ENCODE measurements at regions of chr10 and their contacts with region 1.

Region 1: GRCh38 chr10:79438021-79438698 is 7.3 kb downstream of the ZCCHC24 start:
- DNase-seq: peak; percentile 64
- ATAC-seq: peak; percentile 2; the same call in 1 of the 2 replicates
- H3K4me3 ChIP-seq: no peak overlapping the region
- H3K27ac ChIP-seq: peak overlapping the region; percentile 82
- H3K4me1 ChIP-seq: peaks cover 81% of the 10 kb centered on the region
- H3K27me3 ChIP-seq: no peaks in the 10 kb centered on the region
- CTCF ChIP-seq: peak; percentile 96

Region 2: GRCh38 chr10:79310911-79311573 is 127.1 kb before region 1 on chr10:
- CTCF ChIA-PET with region 1: no interaction called
- POLR2A ChIA-PET with region 1: no interaction called
- intact Hi-C with region 1: no loop called
- DNase-seq: no peak
- ATAC-seq: no peak
- H3K4me3 ChIP-seq: no peak overlapping the region
- H3K27ac ChIP-seq: no peak overlapping the region
- H3K4me1 ChIP-seq: no peaks in the 10 kb centered on the region
- H3K27me3 ChIP-seq: no peaks in the 10 kb centered on the region
- CTCF ChIP-seq: no peak

Region 3: GRCh38 chr10:79411546-79412495 is 26.3 kb before region 1 on chr10:
- CTCF ChIA-PET with region 1: interaction called, 3 read pairs
- POLR2A ChIA-PET with region 1: interaction called, 4 read pairs
- intact Hi-C with region 1: loop called (anchors 2 kb)
- DNase-seq: no peak
- ATAC-seq: no peak
- H3K4me3 ChIP-seq: no peak overlapping the region
- H3K27ac ChIP-seq: no peak overlapping the region
- H3K4me1 ChIP-seq: peaks cover 21% of the 10 kb centered on the region
- H3K27me3 ChIP-seq: no peaks in the 10 kb centered on the region
- CTCF ChIP-seq: no peak

Region 4: GRCh38 chr10:79422178-79422892 is 15.8 kb before region 1 on chr10:
- CTCF ChIA-PET with region 1: interaction called, 10 read pairs
- POLR2A ChIA-PET with region 1: interaction called, 3 read pairs
- intact Hi-C with region 1: no loop called
- DNase-seq: no peak
- ATAC-seq: peak; percentile 6; the same call in 1 of the 2 replicates
- H3K4me3 ChIP-seq: no peak overlapping the region
- H3K27ac ChIP-seq: no peak overlapping the region
- H3K4me1 ChIP-seq: no peaks in the 10 kb centered on the region
- H3K27me3 ChIP-seq: no peaks in the 10 kb centered on the region
- CTCF ChIP-seq: no peak

Region 5: GRCh38 chr10:80372675-80373074 is 934.5 kb after region 1 on chr10:
- CTCF ChIA-PET with region 1: no interaction called
- POLR2A ChIA-PET with region 1: no interaction called
- intact Hi-C with region 1: no loop called
- DNase-seq: no peak
- ATAC-seq: no peak
- H3K4me3 ChIP-seq: no peak overlapping the region
- H3K27ac ChIP-seq: no peak overlapping the region
- H3K4me1 ChIP-seq: no peaks in the 10 kb centered on the region
- H3K27me3 ChIP-seq: no peaks in the 10 kb centered on the region
- CTCF ChIP-seq: no peak